Naive thymus-derived CD4-positive, alpha-beta T cell (primary cell): ENCODE measurements at regions of chr1 and their contacts with region 1.

Region 1: DNA sequence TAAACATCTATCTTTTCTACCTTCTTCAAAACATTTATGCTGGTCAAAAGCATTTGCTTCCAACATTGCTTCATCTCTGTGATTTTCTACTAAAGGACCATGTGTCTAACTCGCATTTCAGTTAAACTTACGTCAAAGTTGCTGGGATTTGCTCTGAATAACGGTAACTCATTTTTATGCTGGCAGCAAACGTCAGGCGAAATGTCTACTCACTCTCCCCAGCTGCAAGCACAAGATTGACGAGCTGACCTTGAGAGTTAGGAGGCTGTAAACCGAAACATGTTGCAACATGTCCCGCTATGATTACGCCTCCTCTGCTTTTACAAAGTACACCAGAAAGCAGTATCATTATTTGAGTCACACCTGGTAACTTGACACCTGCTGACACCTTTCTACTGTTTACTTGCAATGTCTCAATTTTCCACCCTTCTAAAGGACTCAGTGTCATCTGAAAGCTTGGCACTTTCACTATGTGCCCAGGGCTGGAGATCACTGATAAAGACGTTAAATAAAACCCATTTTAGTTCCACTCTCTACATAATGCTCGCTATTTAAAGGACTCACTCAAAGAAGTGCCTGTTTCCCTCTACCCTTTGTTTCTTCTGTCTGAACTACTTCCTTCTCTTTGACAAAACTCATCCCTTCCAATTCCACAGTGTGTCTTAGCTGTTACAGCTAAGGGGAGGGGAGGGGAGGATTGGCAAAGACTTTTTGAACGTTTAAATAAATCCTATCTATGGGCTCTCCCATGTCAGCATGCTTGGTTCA is 111.9 kb downstream of the PTPN14 start:
- DNase-seq: peak in 4 of 9 donors; percentile 5 to 47 (median 12)
- ATAC-seq: peak; percentile 58
- H3K4me3 ChIP-seq: peak overlapping the region; percentile 3
- H3K4me3 Mint-ChIP-seq: peak overlapping the region; percentile 27 to 85 (median 66)
- H3K27ac ChIP-seq: no peak overlapping the region
- H3K27ac Mint-ChIP-seq: peak overlapping the region in 8 of 9 donors; percentile 1 to 96 (median 30)
- H3K4me1 ChIP-seq: no peaks in the 10 kb centered on the region
- H3K4me1 Mint-ChIP-seq: peaks cover 15 to 59% (median 30%) of the 10 kb centered on the region in 7 donors
- H3K27me3 ChIP-seq: no peaks in the 10 kb centered on the region
- H3K27me3 Mint-ChIP-seq: peaks cover 0 to 16% (median 6%) of the 10 kb centered on the region in 5 donors

Region 2: GRCh38 chr1:214281021-214281719 is 158.4 kb before region 1 on chr1 and contains the start of gene SMYD2:
- CTCF ChIA-PET with region 1: no interaction called
- POLR2A ChIA-PET with region 1: no interaction called
- intact Hi-C with region 1: loop called in 1 of 2 experiments (anchors 5 kb)
- DNase-seq: peak; percentile 49 to 77 (median 72)
- ATAC-seq: peak; percentile 86
- H3K4me3 ChIP-seq: peak within 1 kb of the TSS; percentile 88
- H3K4me3 Mint-ChIP-seq: peak within 1 kb of the TSS; percentile 79 to 98 (median 90)
- H3K27ac ChIP-seq: peak within 1 kb of the TSS; percentile 82
- H3K27ac Mint-ChIP-seq: peak within 1 kb of the TSS; percentile 81 to 95 (median 91)
- H3K4me1 ChIP-seq: peaks cover 17 to 34% of the 10 kb centered on the region in 2 donors
- H3K4me1 Mint-ChIP-seq: peaks cover 30 to 64% (median 45%) of the 10 kb centered on the region in 7 donors
- H3K27me3 ChIP-seq: no peaks in the 10 kb centered on the region
- H3K27me3 Mint-ChIP-seq: no peaks in the 10 kb centered on the region
- total RNA-seq, gene SMYD2: 24.3 to 39.5 (median 34.4) TPM

Region 3: GRCh38 chr1:214380396-214380795 is 59.1 kb before region 1 on chr1:
- CTCF ChIA-PET with region 1: no interaction called
- POLR2A ChIA-PET with region 1: no interaction called
- intact Hi-C with region 1: no loop called
- DNase-seq: no peak
- ATAC-seq: no peak
- H3K4me3 ChIP-seq: no peak overlapping the region
- H3K4me3 Mint-ChIP-seq: no peak overlapping the region
- H3K27ac ChIP-seq: no peak overlapping the region
- H3K27ac Mint-ChIP-seq: no peak overlapping the region
- H3K4me1 ChIP-seq: no peaks in the 10 kb centered on the region
- H3K4me1 Mint-ChIP-seq: peaks cover 0 to 3% (median 0%) of the 10 kb centered on the region in 7 donors
- H3K27me3 ChIP-seq: no peaks in the 10 kb centered on the region
- H3K27me3 Mint-ChIP-seq: peaks cover 0 to 4% (median 0%) of the 10 kb centered on the region in 5 donors

Region 4: DNA sequence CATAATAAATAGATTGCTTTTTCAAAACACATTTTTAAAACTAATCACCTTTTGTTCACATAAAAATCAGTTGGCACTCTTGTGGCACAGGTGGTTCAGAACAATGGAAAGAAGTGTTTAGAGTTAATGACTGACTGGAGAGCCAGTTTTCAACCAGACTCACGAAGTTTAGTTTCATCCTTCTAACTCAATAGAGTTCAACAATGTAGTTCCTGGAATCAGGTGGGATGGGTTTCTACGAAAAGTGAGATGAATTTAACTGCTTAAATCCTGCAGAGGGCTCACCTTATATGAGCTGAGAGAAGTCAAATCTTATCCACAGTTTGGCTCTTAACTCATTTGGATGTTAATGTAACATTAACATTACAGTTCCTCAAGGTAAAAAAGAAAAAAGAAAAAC is 42.0 kb before region 1 on chr1:
- CTCF ChIA-PET with region 1: no interaction called
- POLR2A ChIA-PET with region 1: no interaction called
- intact Hi-C with region 1: loop called in 1 of 2 experiments (anchors 1 kb)
- DNase-seq: no peak
- ATAC-seq: no peak
- H3K4me3 ChIP-seq: no peak overlapping the region
- H3K4me3 Mint-ChIP-seq: peak overlapping the region in 1 of 10 donors; percentile 59
- H3K27ac ChIP-seq: no peak overlapping the region
- H3K27ac Mint-ChIP-seq: peak overlapping the region in 1 of 9 donors; percentile 69
- H3K4me1 ChIP-seq: no peaks in the 10 kb centered on the region
- H3K4me1 Mint-ChIP-seq: peaks cover 7 to 46% (median 17%) of the 10 kb centered on the region in 7 donors
- H3K27me3 ChIP-seq: no peaks in the 10 kb centered on the region
- H3K27me3 Mint-ChIP-seq: peaks cover 0 to 4% (median 0%) of the 10 kb centered on the region in 5 donors

Region 5: DNA sequence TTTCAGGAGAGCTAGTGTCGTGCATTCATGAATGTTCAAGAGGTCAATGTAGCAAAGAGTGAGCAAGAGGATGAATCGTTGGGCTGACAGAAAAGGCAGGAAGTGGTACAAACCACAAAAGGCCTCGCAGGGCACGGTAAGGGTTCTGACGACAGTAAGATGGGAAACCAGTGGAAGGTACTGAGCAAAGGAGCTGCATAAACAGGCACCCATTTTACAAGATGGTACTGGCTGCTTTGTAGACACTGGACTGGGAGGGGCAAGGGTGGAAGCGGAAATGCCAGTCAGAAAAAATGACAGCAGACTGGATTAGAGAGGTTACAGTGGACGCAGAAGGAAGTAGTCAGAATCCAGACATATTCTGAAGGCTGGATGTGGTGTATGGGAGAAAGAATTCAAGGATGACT is 11.7 kb before region 1 on chr1:
- CTCF ChIA-PET with region 1: no interaction called
- POLR2A ChIA-PET with region 1: no interaction called
- intact Hi-C with region 1: loop called in 1 of 2 experiments (anchors 1 kb)
- DNase-seq: peak in 8 of 9 donors; percentile 54 to 82 (median 71)
- ATAC-seq: peak; percentile 95
- H3K4me3 ChIP-seq: no peak overlapping the region
- H3K4me3 Mint-ChIP-seq: peak overlapping the region; percentile 50 to 81 (median 64)
- H3K27ac ChIP-seq: no peak overlapping the region
- H3K27ac Mint-ChIP-seq: peak overlapping the region; percentile 64 to 98 (median 85)
- H3K4me1 ChIP-seq: peaks cover 11 to 18% of the 10 kb centered on the region in 2 donors
- H3K4me1 Mint-ChIP-seq: peaks cover 18 to 48% (median 34%) of the 10 kb centered on the region in 7 donors
- H3K27me3 ChIP-seq: no peaks in the 10 kb centered on the region
- H3K27me3 Mint-ChIP-seq: peaks cover 0 to 3% (median 0%) of the 10 kb centered on the region in 5 donors

Region 6: GRCh38 chr1:214551436-214552173 is 112.1 kb after region 1 on chr1 and contains the start of gene PTPN14:
- CTCF ChIA-PET with region 1: no interaction called
- POLR2A ChIA-PET with region 1: no interaction called
- intact Hi-C with region 1: loop called in 1 of 2 experiments (anchors 5 kb)
- DNase-seq: peak in 1 of 9 donors; percentile 48
- ATAC-seq: no peak
- H3K4me3 ChIP-seq: no peak within 1 kb of the TSS
- H3K4me3 Mint-ChIP-seq: peak within 1 kb of the TSS in 9 of 10 donors; percentile 51 to 86 (median 74)
- H3K27ac ChIP-seq: no peak within 1 kb of the TSS
- H3K27ac Mint-ChIP-seq: peak within 1 kb of the TSS in 1 of 9 donors; percentile 73
- H3K4me1 ChIP-seq: no peaks in the 10 kb centered on the region
- H3K4me1 Mint-ChIP-seq: peaks cover 0 to 15% (median 5%) of the 10 kb centered on the region in 7 donors
- H3K27me3 ChIP-seq: peaks cover 0 to 6% of the 10 kb centered on the region in 2 donors
- H3K27me3 Mint-ChIP-seq: peaks cover 51 to 78% (median 55%) of the 10 kb centered on the region in 5 donors
- total RNA-seq, gene PTPN14: 0.03 to 5.8 (median 0.07) TPM